ENCODE measurements at regions of chr11 and their contacts with region 1.

Region 1: GRCh38 chr11:46916286-46917108 is 1.9 kb downstream of the LRP4 start:
- DNase-seq: no peak
- H3K4me3 Mint-ChIP-seq: peak overlapping the region; percentile 66
- H3K27ac Mint-ChIP-seq: no peak overlapping the region
- H3K4me1 Mint-ChIP-seq: peaks cover 22% of the 10 kb centered on the region
- H3K27me3 Mint-ChIP-seq: peaks cover 68% of the 10 kb centered on the region

Region 2: GRCh38 chr11:46936138-46937110 is 19.9 kb after region 1 on chr11 and contains the start of gene CSTPP1:
- intact Hi-C with region 1: loop called (anchors 1 kb)
- DNase-seq: peak; percentile 87
- H3K4me3 Mint-ChIP-seq: peak within 1 kb of the TSS; percentile 96
- H3K27ac Mint-ChIP-seq: peak within 1 kb of the TSS; percentile 87
- H3K4me1 Mint-ChIP-seq: peaks cover 18% of the 10 kb centered on the region
- H3K27me3 Mint-ChIP-seq: peaks cover 4% of the 10 kb centered on the region
- total RNA-seq, gene CSTPP1: 17.8 and 19.0 TPM in 2 replicates

Region 3: DNA sequence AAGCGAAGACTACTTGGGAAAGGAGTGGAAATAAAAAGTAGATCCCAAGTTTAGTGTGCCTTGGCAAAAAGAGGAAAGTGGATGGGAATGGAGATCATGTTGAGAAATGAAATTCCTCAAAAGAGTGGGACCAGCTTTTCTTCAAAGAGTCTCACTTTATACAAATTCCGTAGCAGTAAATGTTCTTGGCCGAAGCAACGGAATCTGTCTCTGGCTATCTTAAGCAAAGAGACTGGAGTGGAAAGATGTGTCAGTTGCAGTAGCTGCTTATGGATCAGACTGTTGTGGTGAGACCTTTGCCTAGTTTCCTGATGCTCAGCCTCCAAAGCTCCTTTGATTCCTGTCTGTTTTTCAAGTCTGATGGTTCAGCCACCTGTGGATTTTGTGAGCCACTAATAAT is 93.7 kb after region 1 on chr11:
- intact Hi-C with region 1: loop called (anchors 10 kb)
- DNase-seq: no peak
- H3K4me3 Mint-ChIP-seq: no peak overlapping the region
- H3K27ac Mint-ChIP-seq: no peak overlapping the region
- H3K4me1 Mint-ChIP-seq: peaks cover 2% of the 10 kb centered on the region
- H3K27me3 Mint-ChIP-seq: no peaks in the 10 kb centered on the region

Region 4: GRCh38 chr11:47127213-47127612 is 210.7 kb after region 1 on chr11:
- intact Hi-C with region 1: no loop called
- DNase-seq: no peak
- H3K4me3 Mint-ChIP-seq: no peak overlapping the region
- H3K27ac Mint-ChIP-seq: no peak overlapping the region
- H3K4me1 Mint-ChIP-seq: no peaks in the 10 kb centered on the region
- H3K27me3 Mint-ChIP-seq: no peaks in the 10 kb centered on the region

Measured in activated T-helper 2 cell treated with anti-CD3 and anti-CD28 coated beads, Interferon-gamma antibody, Interleukin-2, Interleukin-4, amounts not matched to agents 10 μg/mL and 5 μg/mL and 100 μg/mL, durations not matched to agents 14 hours and 24 hours and 36 hours (primary cell).